ENCODE measurements at regions of chr5 and their contacts with region 1.

Region 1: GRCh38 chr5:176959051-176959450 is 47.5 kb downstream of the UIMC1 start:
- DNase-seq: no peak
- ATAC-seq: no peak
- H3K4me3 ChIP-seq: no peak overlapping the region
- H3K27ac ChIP-seq: no peak overlapping the region
- H3K4me1 ChIP-seq: no peaks in the 10 kb centered on the region
- H3K27me3 ChIP-seq: no peaks in the 10 kb centered on the region

Region 2: GRCh38 chr5:176660860-176661641 is 298.0 kb before region 1 on chr5:
- intact Hi-C with region 1: loop called in 1 of 2 experiments (anchors 5 kb)
- DNase-seq: peak; percentile 79 to 91
- ATAC-seq: peak; percentile 85
- H3K4me3 ChIP-seq: no peak overlapping the region
- H3K27ac ChIP-seq: no peak overlapping the region
- H3K4me1 ChIP-seq: no peaks in the 10 kb centered on the region
- H3K27me3 ChIP-seq: no peaks in the 10 kb centered on the region

Region 3: GRCh38 chr5:176739461-176740051 is 219.5 kb before region 1 on chr5:
- intact Hi-C with region 1: no loop called
- DNase-seq: peak in 1 of 2 donors; percentile 52
- ATAC-seq: no peak
- H3K4me3 ChIP-seq: no peak overlapping the region
- H3K27ac ChIP-seq: no peak overlapping the region
- H3K4me1 ChIP-seq: no peaks in the 10 kb centered on the region
- H3K27me3 ChIP-seq: no peaks in the 10 kb centered on the region

Region 4: DNA sequence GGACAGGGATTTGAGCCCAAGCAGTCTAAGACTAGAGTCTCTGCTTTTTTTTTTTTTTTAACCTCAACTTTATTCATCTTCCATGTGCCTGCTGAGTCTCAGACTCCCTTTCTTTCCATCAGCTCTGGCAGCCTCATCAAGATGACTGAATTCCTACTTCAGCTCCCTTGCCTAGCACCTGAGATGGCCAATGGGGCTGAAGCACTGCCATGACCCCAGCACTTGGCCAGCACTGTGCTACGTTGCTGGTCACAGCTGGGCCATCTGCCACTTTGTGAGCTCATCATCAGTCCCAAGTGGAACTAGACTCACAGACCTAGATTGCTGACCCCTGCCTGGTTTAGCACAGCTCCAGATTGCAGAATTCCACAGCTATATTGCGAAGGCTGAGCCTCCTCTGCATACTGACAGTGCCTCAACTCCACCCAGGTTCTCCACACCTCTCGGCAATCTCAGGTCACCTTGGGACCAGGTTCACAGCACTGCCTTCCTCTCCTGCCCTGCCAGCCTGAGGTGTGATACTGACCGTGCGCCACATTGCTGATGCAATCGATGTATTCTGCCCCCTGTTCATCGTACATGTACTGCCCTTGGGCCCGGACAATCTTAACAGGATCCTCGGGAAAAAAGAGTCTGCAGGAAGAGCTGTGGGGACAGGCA is 1272.0 kb after region 1 on chr5:
- intact Hi-C with region 1: no loop called
- DNase-seq: peak in 1 of 2 donors; percentile 85
- ATAC-seq: no peak
- H3K4me3 ChIP-seq: peak overlapping the region in 1 of 2 donors; percentile 45
- H3K27ac ChIP-seq: no peak overlapping the region
- H3K4me1 ChIP-seq: peaks cover 0 to 2% of the 10 kb centered on the region in 2 donors
- H3K27me3 ChIP-seq: no peaks in the 10 kb centered on the region